ENCODE measurements at regions of chr17 and their contacts with region 1.

Region 1: DNA sequence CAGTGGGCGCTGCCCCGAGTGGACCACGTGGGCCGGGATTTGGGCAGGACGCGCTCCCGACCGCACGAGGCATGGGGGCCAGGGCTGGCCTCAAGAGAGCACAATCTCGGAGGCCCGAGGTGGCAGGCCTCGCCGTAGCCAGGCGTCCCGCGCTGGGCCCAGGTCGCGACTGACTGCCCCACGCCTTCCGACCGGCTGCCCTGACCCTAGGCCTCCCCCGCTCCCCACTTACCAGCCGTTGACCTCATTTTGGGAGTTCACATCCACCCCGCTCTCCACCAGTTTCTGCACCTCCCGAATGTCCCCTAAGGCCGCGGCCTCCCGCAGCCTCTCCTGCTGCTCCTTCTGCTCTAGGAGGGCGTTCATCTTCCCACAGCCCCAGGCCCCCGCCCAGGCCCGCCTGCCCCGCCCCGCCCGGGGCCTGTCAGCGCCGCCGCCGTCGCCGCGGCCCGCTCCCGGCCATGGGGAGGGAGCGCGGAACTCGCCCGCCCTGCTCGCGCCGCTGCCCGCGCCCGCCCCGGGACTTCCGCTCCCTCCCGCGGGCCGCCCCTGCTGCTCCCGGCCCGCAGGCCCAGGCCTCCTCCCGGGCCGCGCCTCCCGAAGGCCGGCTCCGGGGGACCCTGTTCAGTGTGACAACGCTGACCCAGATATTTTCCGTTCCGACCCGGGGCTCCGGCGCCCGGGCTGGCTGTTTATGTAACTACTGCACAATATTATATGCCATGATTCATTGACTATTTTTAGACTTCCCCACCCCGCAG is at the start of gene ANKRD40:
- DNase-seq: peak; percentile 98
- H3K4me3 Mint-ChIP-seq: peak within 1 kb of the TSS; percentile 86
- H3K27ac Mint-ChIP-seq: peak within 1 kb of the TSS; percentile 98
- H3K4me1 Mint-ChIP-seq: peaks cover 33% of the 10 kb centered on the region
- H3K27me3 Mint-ChIP-seq: peaks cover 2% of the 10 kb centered on the region
- total RNA-seq, gene ANKRD40: 47.7 and 49.8 TPM in 2 replicates

Region 2: GRCh38 chr17:50649042-50649904 is 58.2 kb before region 1 on chr17:
- intact Hi-C with region 1: no loop called
- DNase-seq: no peak
- H3K4me3 Mint-ChIP-seq: no peak overlapping the region
- H3K27ac Mint-ChIP-seq: no peak overlapping the region
- H3K4me1 Mint-ChIP-seq: no peaks in the 10 kb centered on the region
- H3K27me3 Mint-ChIP-seq: peaks cover 31% of the 10 kb centered on the region

Region 3: GRCh38 chr17:50719144-50719923 is 11.9 kb after region 1 on chr17 and contains the start of gene LUC7L3:
- intact Hi-C with region 1: loop called (anchors 1 kb)
- DNase-seq: peak; percentile 99
- H3K4me3 Mint-ChIP-seq: peak within 1 kb of the TSS; percentile 82
- H3K27ac Mint-ChIP-seq: peak within 1 kb of the TSS; percentile 99
- H3K4me1 Mint-ChIP-seq: peaks cover 10% of the 10 kb centered on the region
- H3K27me3 Mint-ChIP-seq: no peaks in the 10 kb centered on the region
- total RNA-seq, gene LUC7L3: 125 and 133 TPM in 2 replicates

Region 4: DNA sequence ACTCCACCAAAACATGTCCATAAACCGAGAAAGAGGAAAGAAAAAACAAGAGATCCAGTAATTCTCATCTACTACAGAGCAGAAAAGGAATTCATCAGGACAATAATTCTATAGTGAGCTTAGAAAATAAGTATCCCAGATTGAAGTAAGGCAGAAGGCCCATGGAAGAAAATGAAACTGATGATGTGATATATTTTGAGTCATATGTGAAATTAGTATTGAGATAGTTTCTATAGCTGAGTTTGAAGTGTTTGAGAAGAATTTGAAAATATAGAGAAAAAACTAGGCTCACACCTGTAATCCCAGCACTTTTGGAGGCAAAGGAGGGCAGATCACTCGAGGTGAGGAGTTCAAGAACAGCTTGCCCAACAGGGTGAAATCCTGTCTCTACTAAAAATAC is 31.6 kb after region 1 on chr17:
- intact Hi-C with region 1: no loop called
- DNase-seq: no peak
- H3K4me3 Mint-ChIP-seq: no peak overlapping the region
- H3K27ac Mint-ChIP-seq: peak overlapping the region; percentile 6
- H3K4me1 Mint-ChIP-seq: peaks cover 25% of the 10 kb centered on the region
- H3K27me3 Mint-ChIP-seq: no peaks in the 10 kb centered on the region

Region 5: GRCh38 chr17:51166197-51166986 is 458.9 kb after region 1 on chr17 and contains the start of gene NME2:
- intact Hi-C with region 1: loop called (anchors 5 kb)
- DNase-seq: peak; percentile 94
- H3K4me3 Mint-ChIP-seq: peak within 1 kb of the TSS; percentile 88
- H3K27ac Mint-ChIP-seq: peak within 1 kb of the TSS; percentile 97
- H3K4me1 Mint-ChIP-seq: peaks cover 30% of the 10 kb centered on the region
- H3K27me3 Mint-ChIP-seq: no peaks in the 10 kb centered on the region
- total RNA-seq, gene NME2: 752 and 795 TPM in 2 replicates

Region 6: GRCh38 chr17:52158450-52159042 is 1451.1 kb after region 1 on chr17 and contains the start of gene CA10:
- intact Hi-C with region 1: no loop called
- DNase-seq: no peak
- H3K4me3 Mint-ChIP-seq: no peak within 1 kb of the TSS
- H3K27ac Mint-ChIP-seq: no peak within 1 kb of the TSS
- H3K4me1 Mint-ChIP-seq: no peaks in the 10 kb centered on the region
- H3K27me3 Mint-ChIP-seq: peaks cover 50% of the 10 kb centered on the region
- total RNA-seq, gene CA10: not detected in 2 replicates

Measured in activated CD4-positive, alpha-beta T cell treated with anti-CD3 and anti-CD28 coated beads, Interleukin-2, amount 10 ng/mL, durations not matched to agents 24 days and 14 days (primary cell).